Caco-2 (cell line): ENCODE measurements at regions of chr13 and their contacts with region 1.

Region 1: GRCh38 chr13:98741741-98742435 is 10.6 kb downstream of the SLC15A1 start:
- DNase-seq: peak in 1 of 2 experiments; percentile 22
- H3K4me3 ChIP-seq: no peak overlapping the region
- H3K4me3 Mint-ChIP-seq: no peak overlapping the region
- H3K27ac Mint-ChIP-seq: no peak overlapping the region
- H3K4me1 ChIP-seq: peaks cover 8% of the 10 kb centered on the region
- H3K4me1 Mint-ChIP-seq: peaks cover 5% of the 10 kb centered on the region
- H3K27me3 ChIP-seq: no peaks in the 10 kb centered on the region
- H3K27me3 Mint-ChIP-seq: no peaks in the 10 kb centered on the region
- CTCF ChIP-seq: no peak

Region 2: DNA sequence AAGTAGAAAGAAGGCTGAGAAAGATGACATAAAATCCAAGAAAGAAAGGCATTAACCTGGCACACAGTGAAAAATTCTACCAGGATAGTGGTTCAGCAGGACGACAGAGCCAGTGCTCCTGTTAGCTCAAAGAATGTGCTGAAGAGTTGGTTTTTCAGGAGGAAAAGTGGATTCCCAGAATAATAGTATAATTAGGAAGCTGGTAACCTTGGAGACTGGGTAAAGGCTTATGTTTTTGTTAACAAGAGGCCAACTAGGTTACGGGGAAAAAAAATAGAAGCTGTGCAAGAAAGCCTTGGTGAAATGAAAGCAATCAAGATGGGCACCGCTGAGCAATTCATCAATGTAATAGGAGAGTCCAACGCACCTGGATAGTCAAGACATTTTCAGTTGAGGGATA is 44.1 kb before region 1 on chr13:
- CTCF ChIA-PET with region 1: no interaction called
- POLR2A ChIA-PET with region 1: interaction called, 20 read pairs
- intact Hi-C with region 1: no loop called
- DNase-seq: no peak
- H3K4me3 ChIP-seq: no peak overlapping the region
- H3K4me3 Mint-ChIP-seq: no peak overlapping the region
- H3K27ac Mint-ChIP-seq: no peak overlapping the region
- H3K4me1 ChIP-seq: no peaks in the 10 kb centered on the region
- H3K4me1 Mint-ChIP-seq: no peaks in the 10 kb centered on the region
- H3K27me3 ChIP-seq: no peaks in the 10 kb centered on the region
- H3K27me3 Mint-ChIP-seq: no peaks in the 10 kb centered on the region
- CTCF ChIP-seq: no peak